ENCODE measurements at regions of chr6 and their contacts with region 1.

Region 1: GRCh38 chr6:108896111-108896661 is 48.0 kb downstream of the ARMC2 start:
- DNase-seq: no peak
- ATAC-seq: no peak
- H3K4me3 ChIP-seq: peak overlapping the region in 1 of 5 experiments; percentile 16
- H3K4me3 Mint-ChIP-seq: peak overlapping the region; percentile 2
- H3K27ac ChIP-seq: peak overlapping the region in 1 of 2 donors; percentile 39
- H3K27ac Mint-ChIP-seq: peak overlapping the region; percentile 2
- H3K4me1 ChIP-seq: peaks cover 22 to 28% of the 10 kb centered on the region in 2 donors
- H3K4me1 Mint-ChIP-seq: peaks cover 17% of the 10 kb centered on the region
- H3K27me3 ChIP-seq: no peaks in the 10 kb centered on the region
- H3K27me3 Mint-ChIP-seq: no peaks in the 10 kb centered on the region
- CTCF ChIP-seq: no peak

Region 2: DNA sequence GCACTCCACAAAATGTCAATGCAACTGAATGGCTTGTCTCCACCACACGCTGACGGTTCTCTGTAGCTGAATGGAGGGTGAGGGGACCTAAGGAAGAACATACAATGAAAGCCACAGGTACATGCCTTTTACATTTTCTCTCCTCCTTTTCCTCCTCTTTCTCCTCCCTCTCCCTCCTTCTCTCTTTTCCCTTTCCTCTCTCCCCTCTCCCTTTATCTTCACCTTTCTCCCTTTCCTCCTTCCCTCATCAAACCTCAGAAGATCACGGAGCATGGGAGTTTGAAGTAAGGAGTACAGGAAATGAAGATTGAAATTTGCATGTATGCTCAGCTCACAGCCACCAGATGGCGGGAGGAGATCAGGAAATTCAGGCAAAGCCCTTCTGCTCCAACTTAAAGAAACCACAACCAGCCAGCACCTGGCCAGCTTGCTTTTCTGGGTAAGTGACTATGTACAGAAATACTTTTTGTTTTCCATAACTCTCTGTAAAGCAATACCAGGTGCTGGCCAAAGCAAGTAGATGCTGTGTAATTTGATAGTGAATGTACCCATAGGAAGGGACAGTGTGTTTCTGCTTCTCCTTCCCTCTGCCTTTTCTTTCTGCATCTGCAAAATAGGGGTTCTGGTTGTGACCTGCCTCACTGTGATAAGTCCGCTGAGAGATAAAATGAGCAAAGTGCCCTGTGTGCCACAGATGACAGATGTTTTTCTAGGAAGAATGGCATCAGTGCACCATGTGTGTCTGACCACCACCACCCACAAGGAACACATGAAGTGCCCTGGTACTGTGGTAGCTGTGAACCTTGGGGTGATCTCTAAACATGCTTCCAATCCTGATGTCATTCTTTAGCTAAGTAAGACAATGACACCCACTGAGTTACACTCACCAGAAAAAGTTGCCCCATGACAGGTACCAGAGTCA is 354.1 kb before region 1 on chr6:
- CTCF ChIA-PET with region 1: interaction called, 66 read pairs
- POLR2A ChIA-PET with region 1: interaction called, 3 read pairs
- intact Hi-C with region 1: loop called (anchors 1 kb)
- DNase-seq: peak; percentile 87
- ATAC-seq: peak; percentile 84
- H3K4me3 ChIP-seq: no peak overlapping the region
- H3K4me3 Mint-ChIP-seq: no peak overlapping the region
- H3K27ac ChIP-seq: no peak overlapping the region
- H3K27ac Mint-ChIP-seq: no peak overlapping the region
- H3K4me1 ChIP-seq: peaks cover 15 to 17% of the 10 kb centered on the region in 2 donors
- H3K4me1 Mint-ChIP-seq: peaks cover 12% of the 10 kb centered on the region
- H3K27me3 ChIP-seq: peaks cover 0 to 2% (median 0%) of the 10 kb centered on the region in 4 experiments
- H3K27me3 Mint-ChIP-seq: peaks cover 9% of the 10 kb centered on the region
- CTCF ChIP-seq: peak; percentile 93

Region 3: GRCh38 chr6:108782179-108783041 is 113.8 kb before region 1 on chr6:
- CTCF ChIA-PET with region 1: interaction called, 5 read pairs
- POLR2A ChIA-PET with region 1: no interaction called
- intact Hi-C with region 1: loop called (anchors 5 kb)
- DNase-seq: peak; percentile 84
- ATAC-seq: peak; percentile 96
- H3K4me3 ChIP-seq: peak overlapping the region; percentile 43 to 78 (median 59)
- H3K4me3 Mint-ChIP-seq: peak overlapping the region; percentile 81
- H3K27ac ChIP-seq: no peak overlapping the region
- H3K27ac Mint-ChIP-seq: no peak overlapping the region
- H3K4me1 ChIP-seq: peaks cover 23 to 31% of the 10 kb centered on the region in 2 donors
- H3K4me1 Mint-ChIP-seq: peaks cover 25% of the 10 kb centered on the region
- H3K27me3 ChIP-seq: peaks cover 0 to 20% (median 8%) of the 10 kb centered on the region in 4 experiments
- H3K27me3 Mint-ChIP-seq: peaks cover 27% of the 10 kb centered on the region
- CTCF ChIP-seq: peak; percentile 84

Region 4: DNA sequence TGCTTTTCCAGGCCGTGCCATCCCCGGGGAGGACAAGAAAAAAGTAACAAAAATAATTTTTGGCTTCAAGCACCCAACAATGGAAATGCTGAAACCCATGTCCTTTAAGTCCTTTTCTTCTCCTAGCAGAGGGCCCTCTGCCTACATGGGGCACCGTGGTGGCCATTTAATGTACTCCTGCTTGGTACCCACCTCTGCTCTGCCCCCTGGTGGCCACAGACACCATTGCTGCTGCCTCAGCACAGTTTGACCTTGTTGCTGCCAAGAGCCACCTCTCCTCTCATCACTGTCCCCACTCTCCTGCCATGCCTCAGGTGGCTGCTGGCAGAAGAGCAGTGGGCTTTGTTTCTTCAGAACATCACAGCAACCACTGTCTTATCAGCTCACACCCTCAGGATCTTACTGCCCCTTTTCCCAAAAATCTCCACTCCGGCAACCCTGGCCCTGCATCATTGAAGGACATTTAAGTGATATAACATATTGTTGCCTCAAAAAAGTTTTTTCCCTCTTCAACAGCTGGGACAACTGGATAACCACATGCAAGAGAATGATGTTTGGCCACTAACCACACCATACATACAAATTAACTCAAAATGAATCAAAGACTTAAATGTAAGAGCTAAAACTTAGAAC is 60.9 kb before region 1 on chr6:
- CTCF ChIA-PET with region 1: interaction called, 7 read pairs
- POLR2A ChIA-PET with region 1: no interaction called
- intact Hi-C with region 1: loop called (anchors 2 kb)
- DNase-seq: peak; percentile 86
- ATAC-seq: peak; percentile 96
- H3K4me3 ChIP-seq: no peak overlapping the region
- H3K4me3 Mint-ChIP-seq: no peak overlapping the region
- H3K27ac ChIP-seq: no peak overlapping the region
- H3K27ac Mint-ChIP-seq: no peak overlapping the region
- H3K4me1 ChIP-seq: peaks cover 14 to 17% of the 10 kb centered on the region in 2 donors
- H3K4me1 Mint-ChIP-seq: peaks cover 25% of the 10 kb centered on the region
- H3K27me3 ChIP-seq: peaks cover 0 to 6% (median 2%) of the 10 kb centered on the region in 4 experiments
- H3K27me3 Mint-ChIP-seq: peaks cover 15% of the 10 kb centered on the region
- CTCF ChIP-seq: peak; percentile 92

Region 5: GRCh38 chr6:108883172-108883571 is 13.0 kb before region 1 on chr6:
- CTCF ChIA-PET with region 1: interaction called, 13 read pairs
- POLR2A ChIA-PET with region 1: no interaction called
- intact Hi-C with region 1: no loop called
- DNase-seq: no peak
- ATAC-seq: peak; percentile 10
- H3K4me3 ChIP-seq: no peak overlapping the region
- H3K4me3 Mint-ChIP-seq: peak overlapping the region; percentile 57
- H3K27ac ChIP-seq: no peak overlapping the region
- H3K27ac Mint-ChIP-seq: peak overlapping the region; percentile 67
- H3K4me1 ChIP-seq: peaks cover 17 to 20% of the 10 kb centered on the region in 2 donors
- H3K4me1 Mint-ChIP-seq: peaks cover 21% of the 10 kb centered on the region
- H3K27me3 ChIP-seq: no peaks in the 10 kb centered on the region
- H3K27me3 Mint-ChIP-seq: no peaks in the 10 kb centered on the region
- CTCF ChIP-seq: no peak